ENCODE measurements at regions of chr7 and their contacts with region 1.

Region 1: DNA sequence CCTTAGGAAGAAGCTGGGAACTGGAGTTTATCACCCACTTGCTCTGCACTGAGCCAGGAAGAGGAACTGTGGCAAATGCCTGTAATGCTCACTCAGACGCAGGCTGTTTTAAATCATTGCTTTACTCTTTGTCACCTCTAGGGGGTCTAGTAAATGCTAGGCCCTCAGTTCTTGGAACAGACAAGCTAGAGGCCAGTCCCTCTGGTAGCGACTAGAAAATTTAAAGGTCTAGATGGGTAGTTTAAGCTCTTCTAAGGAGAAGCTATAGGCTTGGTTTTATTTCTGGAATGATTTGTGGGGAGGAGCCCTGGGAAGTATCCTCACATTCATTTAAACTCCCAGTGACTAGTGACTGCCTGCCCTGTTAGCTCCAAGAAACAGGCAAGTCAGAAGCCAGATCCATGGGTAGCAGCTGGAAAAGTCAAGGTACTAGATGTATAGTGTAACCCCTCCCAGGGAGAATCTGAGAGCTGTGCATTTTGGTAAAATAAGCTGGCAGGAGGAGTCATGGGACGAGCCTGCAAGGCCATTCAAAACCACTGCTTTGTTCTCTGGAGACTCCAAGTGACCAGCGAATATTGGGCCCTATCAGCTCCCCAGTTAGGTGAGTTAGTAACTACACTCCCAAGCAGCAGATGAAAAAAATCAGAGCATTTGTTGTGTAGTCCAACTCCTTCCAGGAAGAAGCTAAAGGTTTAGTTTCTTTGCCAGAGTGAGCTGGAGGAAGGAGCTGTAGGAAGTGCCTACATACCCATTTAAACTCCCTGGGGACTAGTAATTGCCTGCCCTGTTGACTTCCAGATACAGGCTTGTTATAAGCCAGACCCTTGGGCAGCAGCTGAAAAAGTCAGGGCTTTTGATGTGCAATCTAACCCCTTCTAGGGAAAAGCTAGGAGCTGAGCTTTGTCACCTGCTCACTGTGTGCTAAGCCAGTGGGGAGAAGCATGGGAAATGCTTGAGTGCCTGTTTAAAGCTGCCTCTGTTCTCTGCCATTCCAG is 68.9 kb downstream of the DYNC1I1 start:
- DNase-seq: no peak
- ATAC-seq: peak; percentile 98
- H3K4me3 ChIP-seq: no peak overlapping the region
- H3K27ac ChIP-seq: no peak overlapping the region
- H3K4me1 ChIP-seq: no peaks in the 10 kb centered on the region
- H3K27me3 ChIP-seq: no peaks in the 10 kb centered on the region
- CTCF ChIP-seq: peak; percentile 30 to 56 (median 43)
- EP300 ChIP-seq: no peak
- POLR2A ChIP-seq: no peak
- RAD21 ChIP-seq: no peak

Region 2: DNA sequence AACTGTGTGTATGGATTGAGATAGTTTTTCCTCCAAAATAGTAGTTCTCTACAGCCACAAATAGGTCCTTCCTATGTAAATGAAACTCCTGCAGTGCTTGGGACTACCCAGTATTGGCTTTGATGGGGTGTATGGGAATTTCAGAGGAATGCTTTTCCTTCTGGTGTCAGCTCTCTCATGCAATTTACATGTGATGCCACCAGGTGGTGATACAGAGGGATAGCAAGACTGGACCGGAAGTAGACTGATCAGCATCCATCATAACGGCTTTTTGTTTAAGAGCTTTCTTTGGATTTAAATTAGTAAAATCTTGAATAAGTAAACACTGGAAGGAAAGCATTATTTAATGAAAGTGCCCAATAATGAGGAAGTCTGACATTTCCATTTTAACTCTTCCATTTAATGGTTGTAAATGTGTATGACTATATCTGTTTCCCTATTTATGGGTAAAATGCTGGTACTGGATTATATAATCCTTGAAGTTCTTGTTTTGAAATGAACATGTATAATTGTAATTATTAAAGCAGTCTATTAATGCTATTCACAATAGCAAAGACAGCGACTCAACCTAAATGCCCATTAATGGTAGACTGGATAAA is 46.2 kb before region 1 on chr7:
- CTCF ChIA-PET with region 1: interaction called, 20 read pairs
- POLR2A ChIA-PET with region 1: no interaction called
- RAD21 ChIA-PET with region 1: interaction called, 3 read pairs
- SMC1A ChIA-PET with region 1: interaction called, 12 read pairs
- in situ Hi-C with region 1: no loop called
- intact Hi-C with region 1: no loop called
- DNase-seq: no peak
- ATAC-seq: peak; percentile 70
- H3K4me3 ChIP-seq: no peak overlapping the region
- H3K27ac ChIP-seq: no peak overlapping the region
- H3K4me1 ChIP-seq: no peaks in the 10 kb centered on the region
- H3K27me3 ChIP-seq: peaks cover 0 to 2% of the 10 kb centered on the region in 2 experiments; a peak in 1 of 4 replicates
- CTCF ChIP-seq: peak; percentile 31 to 63 (median 56)
- EP300 ChIP-seq: no peak
- POLR2A ChIP-seq: no peak
- RAD21 ChIP-seq: 0 out of 2 replicates have a peak, but pooled peaks have one; percentile 29

Region 3: DNA sequence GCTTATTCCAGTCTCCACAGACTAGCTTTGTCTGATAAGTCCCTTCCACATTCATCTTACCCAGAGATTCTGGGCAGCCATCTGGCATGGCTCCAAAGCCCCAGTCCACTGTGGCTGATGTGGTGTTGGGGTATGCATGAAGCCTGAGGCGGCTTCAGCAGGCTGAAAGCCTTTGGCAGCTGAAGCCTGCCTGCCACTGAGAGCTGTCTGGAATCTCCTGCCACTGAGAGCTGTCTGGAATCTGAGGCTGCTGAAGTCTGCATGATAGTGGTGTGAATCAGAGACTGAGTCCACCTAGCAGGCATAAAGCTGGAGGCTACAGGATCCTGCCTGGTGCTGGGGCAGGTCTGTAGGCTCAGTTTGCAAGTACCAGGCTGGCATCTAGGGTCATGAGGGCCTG is 18.2 kb after region 1 on chr7:
- CTCF ChIA-PET with region 1: interaction called, 33 read pairs
- POLR2A ChIA-PET with region 1: no interaction called
- RAD21 ChIA-PET with region 1: no interaction called
- SMC1A ChIA-PET with region 1: interaction called, 12 read pairs
- in situ Hi-C with region 1: no loop called
- intact Hi-C with region 1: no loop called
- DNase-seq: no peak
- ATAC-seq: no peak
- H3K4me3 ChIP-seq: no peak overlapping the region
- H3K27ac ChIP-seq: no peak overlapping the region
- H3K4me1 ChIP-seq: no peaks in the 10 kb centered on the region
- H3K27me3 ChIP-seq: 0 out of 4 replicates have a peak, but pooled peaks cover 0 to 1% of the 10 kb centered on the region in 2 experiments
- CTCF ChIP-seq: no peak
- EP300 ChIP-seq: no peak
- POLR2A ChIP-seq: no peak
- RAD21 ChIP-seq: no peak

Region 4: DNA sequence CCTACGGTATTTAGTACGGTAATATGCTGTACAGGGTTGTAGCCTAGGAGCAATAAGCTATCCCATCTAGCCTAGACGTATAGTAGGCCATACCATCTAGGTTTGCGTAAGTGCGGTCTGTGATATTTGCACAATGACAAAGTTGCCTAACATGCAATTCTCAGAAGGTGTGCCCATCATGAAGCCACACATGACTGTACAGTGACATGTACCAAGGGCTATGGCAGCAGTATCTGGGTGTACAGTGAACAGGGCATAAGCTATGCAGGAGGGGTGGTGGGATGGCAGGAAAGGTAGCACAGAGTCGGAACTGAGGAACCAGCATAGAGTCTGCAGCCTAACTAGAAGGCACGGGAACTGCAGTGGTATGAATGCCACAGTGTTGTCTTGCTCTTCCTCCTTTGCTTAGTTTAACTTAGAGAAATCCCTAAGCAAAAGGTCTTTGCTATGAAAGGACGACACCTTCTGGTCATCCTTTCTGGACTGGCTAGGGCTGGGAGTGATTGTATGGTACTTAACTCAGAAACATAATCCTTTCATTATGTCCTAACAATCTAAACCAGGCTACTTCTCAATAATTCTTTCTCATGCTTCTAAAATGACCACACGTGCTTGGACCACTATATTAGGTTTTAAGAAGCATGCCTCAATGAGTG is 24.6 kb after region 1 on chr7:
- CTCF ChIA-PET with region 1: interaction called, 50 read pairs
- POLR2A ChIA-PET with region 1: no interaction called
- RAD21 ChIA-PET with region 1: interaction called, 8 read pairs
- SMC1A ChIA-PET with region 1: interaction called, 28 read pairs
- in situ Hi-C with region 1: no loop called
- intact Hi-C with region 1: no loop called
- DNase-seq: no peak
- ATAC-seq: peak; percentile 46
- H3K4me3 ChIP-seq: no peak overlapping the region
- H3K27ac ChIP-seq: no peak overlapping the region
- H3K4me1 ChIP-seq: no peaks in the 10 kb centered on the region
- H3K27me3 ChIP-seq: no peaks in the 10 kb centered on the region
- CTCF ChIP-seq: peak in 1 of 3 experiments; percentile 34; a peak in 1 of 6 replicates
- EP300 ChIP-seq: no peak
- POLR2A ChIP-seq: no peak
- RAD21 ChIP-seq: no peak

Region 5: DNA sequence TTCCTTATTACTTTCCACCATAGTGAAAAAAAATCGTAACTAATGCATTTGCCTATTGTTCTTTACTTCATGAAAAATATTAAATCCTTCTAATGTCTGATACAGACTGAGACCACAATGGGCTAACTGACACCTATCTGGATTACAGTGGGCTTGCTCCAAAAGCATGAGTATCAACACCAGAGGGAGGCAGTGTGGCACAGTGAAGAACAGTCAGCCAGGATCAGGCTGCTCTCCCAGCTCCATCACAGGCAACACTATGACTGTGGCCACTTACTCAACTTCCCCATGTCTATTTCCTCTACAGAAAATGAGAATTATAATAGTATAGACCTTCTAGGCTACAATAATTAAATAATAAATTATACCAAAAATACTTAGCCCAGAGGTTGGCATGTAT is 383.4 kb after region 1 on chr7:
- CTCF ChIA-PET with region 1: no interaction called
- POLR2A ChIA-PET with region 1: no interaction called
- RAD21 ChIA-PET with region 1: no interaction called
- SMC1A ChIA-PET with region 1: no interaction called
- in situ Hi-C with region 1: no loop called
- intact Hi-C with region 1: no loop called
- DNase-seq: no peak
- ATAC-seq: peak; percentile 59
- H3K4me3 ChIP-seq: no peak overlapping the region
- H3K27ac ChIP-seq: no peak overlapping the region
- H3K4me1 ChIP-seq: no peaks in the 10 kb centered on the region
- H3K27me3 ChIP-seq: no peaks in the 10 kb centered on the region
- CTCF ChIP-seq: peak in 1 of 3 experiments; percentile 10; a peak in 1 of 6 replicates
- EP300 ChIP-seq: no peak
- POLR2A ChIP-seq: no peak
- RAD21 ChIP-seq: peak; percentile 35

Measured in GM12878 (cell line).